Astrocyte of the cerebellum (primary cell): ENCODE measurements at regions of chr10 and their contacts with region 1.

Region 1: DNA sequence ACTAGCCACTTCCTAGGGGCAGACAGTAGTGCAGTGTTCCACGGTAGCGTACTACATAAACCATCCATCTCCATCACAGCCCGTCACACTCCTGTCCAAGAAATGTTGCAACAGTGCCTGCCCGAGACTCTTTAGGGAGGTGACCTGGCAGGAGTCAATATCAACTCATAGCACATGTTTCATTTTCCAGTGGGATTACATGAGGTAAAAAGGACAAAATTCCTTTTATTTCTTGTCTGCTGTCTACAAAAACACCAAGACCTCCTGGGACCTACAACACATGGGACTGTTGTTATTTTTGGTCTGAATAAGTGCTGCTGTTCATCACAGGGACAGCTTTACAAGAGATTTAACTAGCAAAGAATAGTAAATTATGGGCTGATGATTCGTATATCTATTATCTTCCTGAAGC is 99.9 kb downstream of the MPP7 start:
- DNase-seq: no peak
- H3K4me3 ChIP-seq: no peak overlapping the region
- CTCF ChIP-seq: no peak

Region 2: DNA sequence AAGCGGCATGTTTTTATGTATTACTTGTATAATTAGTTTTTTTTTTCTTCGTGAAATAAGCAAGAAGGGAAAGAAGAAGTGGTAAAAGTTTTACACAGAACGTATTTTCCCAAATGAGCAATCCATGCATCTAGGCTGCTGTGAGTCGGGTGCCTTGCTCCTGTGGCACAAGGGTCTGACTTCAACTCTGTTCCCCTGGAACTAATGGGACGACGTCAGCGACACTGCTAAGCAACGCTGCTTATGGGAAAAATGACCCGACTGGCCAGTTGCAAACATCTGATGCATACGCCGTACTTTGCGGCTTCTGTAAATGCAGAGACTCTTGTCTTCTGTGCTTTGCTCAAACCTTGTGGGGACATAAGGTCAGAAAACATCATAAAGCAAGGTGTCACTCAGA is 33.6 kb after region 1 on chr10:
- in situ Hi-C with region 1: loop called (anchors 5 kb)
- DNase-seq: no peak
- H3K4me3 ChIP-seq: no peak overlapping the region
- CTCF ChIP-seq: no peak

Region 3: GRCh38 chr10:28291881-28292297 is 88.9 kb after region 1 on chr10:
- in situ Hi-C with region 1: no loop called
- DNase-seq: no peak
- H3K4me3 ChIP-seq: no peak overlapping the region
- CTCF ChIP-seq: no peak